ENCODE measurements at regions of chr7 and their contacts with region 1.

Region 1: DNA sequence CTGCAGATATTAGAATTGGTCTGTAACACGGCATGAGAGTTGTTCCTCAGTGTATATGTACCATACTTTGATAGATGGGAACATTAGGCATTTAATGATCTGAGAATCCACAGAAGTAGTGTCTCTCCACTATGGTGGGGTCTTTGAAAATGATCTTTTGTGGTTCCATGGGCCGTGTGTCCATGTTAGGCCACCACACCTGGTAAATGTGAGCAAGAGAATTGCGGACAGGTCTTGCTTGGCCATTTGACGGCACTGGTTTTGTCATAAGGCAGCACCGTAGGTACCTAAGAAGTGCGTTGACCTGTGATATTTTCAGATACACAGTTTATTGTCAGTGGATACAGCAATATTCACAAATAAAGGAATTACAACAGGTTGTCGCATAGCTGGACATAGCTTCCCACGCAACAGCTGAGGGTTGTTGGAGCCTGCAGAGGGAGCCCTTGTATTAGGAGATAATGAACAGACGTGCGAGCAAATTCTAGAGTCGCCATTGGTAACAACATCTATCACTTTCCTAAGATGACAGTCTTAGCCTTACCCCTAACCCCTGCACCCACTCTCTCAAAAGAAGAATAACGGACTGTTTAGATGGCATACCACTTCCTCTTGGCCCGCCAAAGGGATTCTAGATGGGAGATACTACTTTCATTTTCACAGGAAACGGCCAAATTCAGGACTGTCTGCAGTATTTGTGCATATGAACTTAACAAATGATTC is 111.4 kb downstream of the COL28A1 start:
- H3K4me3 ChIP-seq: no peak overlapping the region
- H3K27ac ChIP-seq: no peak overlapping the region
- H3K4me1 ChIP-seq: no peaks in the 10 kb centered on the region; the same call in 1 of the 2 replicates
- CTCF ChIP-seq: peak; percentile 63

Region 2: DNA sequence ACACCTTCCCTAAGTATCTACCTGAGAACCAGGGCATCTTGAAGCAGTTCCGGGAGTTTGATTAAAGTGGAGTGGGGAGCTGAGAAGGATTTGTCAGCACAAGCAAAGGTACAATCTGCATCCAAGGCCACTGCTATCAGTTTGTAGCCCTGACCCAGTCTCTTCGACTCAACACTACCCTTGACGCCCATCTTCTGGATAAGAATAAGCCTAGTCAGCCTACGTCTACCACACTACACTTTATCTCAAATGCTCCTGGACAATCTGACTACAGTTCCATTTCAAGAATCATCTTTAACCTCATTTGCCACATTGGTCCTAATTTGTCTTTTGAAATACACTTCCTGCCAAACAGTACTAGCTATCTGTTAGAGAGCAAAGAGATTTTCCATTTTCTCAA is 376.1 kb before region 1 on chr7:
- CTCF ChIA-PET with region 1: no interaction called
- POLR2A ChIA-PET with region 1: no interaction called
- H3K4me3 ChIP-seq: no peak overlapping the region
- H3K27ac ChIP-seq: no peak overlapping the region
- H3K4me1 ChIP-seq: no peaks in the 10 kb centered on the region
- CTCF ChIP-seq: no peak

Region 3: DNA sequence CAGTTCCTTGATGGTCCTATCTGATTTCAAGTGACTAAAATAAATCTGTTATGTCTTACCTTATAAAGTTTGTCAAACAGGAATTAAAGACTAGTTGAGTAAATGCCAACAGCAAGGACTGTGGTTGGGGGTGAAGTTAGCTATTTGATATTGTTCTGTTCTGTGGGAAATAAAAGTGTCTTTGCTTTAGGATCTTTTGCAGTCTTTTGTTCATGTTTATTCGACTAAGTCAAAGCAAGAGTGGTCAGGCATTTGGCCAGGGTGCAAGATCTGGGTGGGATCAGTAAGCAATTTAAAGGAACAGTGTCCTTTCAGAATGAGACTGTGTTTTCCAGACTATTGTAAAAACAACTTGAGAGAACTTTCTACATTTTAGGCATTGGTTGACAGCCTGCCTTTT is 111.4 kb after region 1 on chr7 and contains the start of gene COL28A1:
- CTCF ChIA-PET with region 1: interaction called, 39 read pairs
- POLR2A ChIA-PET with region 1: no interaction called
- H3K4me3 ChIP-seq: no peak within 1 kb of the TSS
- H3K27ac ChIP-seq: no peak within 1 kb of the TSS
- H3K4me1 ChIP-seq: no peaks in the 10 kb centered on the region
- CTCF ChIP-seq: no peak

Measured in HEK293 (cell line).